PC-9 (cell line): ENCODE measurements at regions of chr19 and their contacts with region 1.

Region 1: GRCh38 chr19:2578901-2579677 is 103.2 kb downstream of the GADD45B start:
- DNase-seq: peak; percentile 86 to 93
- H3K4me3 ChIP-seq: peak overlapping the region; percentile 51; the same call in 1 of the 2 replicates
- H3K27ac ChIP-seq: peak overlapping the region; percentile 90
- H3K4me1 ChIP-seq: peaks cover 21% of the 10 kb centered on the region
- H3K27me3 ChIP-seq: no peaks in the 10 kb centered on the region
- CTCF ChIP-seq: peak; percentile 87

Region 2: GRCh38 chr19:2494444-2495129 is 84.5 kb before region 1 on chr19:
- CTCF ChIA-PET with region 1: interaction called, 3 read pairs
- POLR2A ChIA-PET with region 1: no interaction called
- intact Hi-C with region 1: loop called (anchors 5 kb)
- DNase-seq: peak; percentile 32 to 50
- H3K4me3 ChIP-seq: peak overlapping the region; percentile 62
- H3K27ac ChIP-seq: peak overlapping the region; percentile 75
- H3K4me1 ChIP-seq: peaks cover 37% of the 10 kb centered on the region
- H3K27me3 ChIP-seq: no peaks in the 10 kb centered on the region
- CTCF ChIP-seq: no peak

Region 3: GRCh38 chr19:2524838-2525723 is 54.0 kb before region 1 on chr19:
- CTCF ChIA-PET with region 1: interaction called, 5 read pairs
- POLR2A ChIA-PET with region 1: interaction called, 4 read pairs
- intact Hi-C with region 1: loop called (anchors 1 kb)
- DNase-seq: peak; percentile 88 to 93
- H3K4me3 ChIP-seq: peak overlapping the region; percentile 50
- H3K27ac ChIP-seq: peak overlapping the region; percentile 88
- H3K4me1 ChIP-seq: peaks cover 41% of the 10 kb centered on the region
- H3K27me3 ChIP-seq: no peaks in the 10 kb centered on the region
- CTCF ChIP-seq: no peak

Region 4: DNA sequence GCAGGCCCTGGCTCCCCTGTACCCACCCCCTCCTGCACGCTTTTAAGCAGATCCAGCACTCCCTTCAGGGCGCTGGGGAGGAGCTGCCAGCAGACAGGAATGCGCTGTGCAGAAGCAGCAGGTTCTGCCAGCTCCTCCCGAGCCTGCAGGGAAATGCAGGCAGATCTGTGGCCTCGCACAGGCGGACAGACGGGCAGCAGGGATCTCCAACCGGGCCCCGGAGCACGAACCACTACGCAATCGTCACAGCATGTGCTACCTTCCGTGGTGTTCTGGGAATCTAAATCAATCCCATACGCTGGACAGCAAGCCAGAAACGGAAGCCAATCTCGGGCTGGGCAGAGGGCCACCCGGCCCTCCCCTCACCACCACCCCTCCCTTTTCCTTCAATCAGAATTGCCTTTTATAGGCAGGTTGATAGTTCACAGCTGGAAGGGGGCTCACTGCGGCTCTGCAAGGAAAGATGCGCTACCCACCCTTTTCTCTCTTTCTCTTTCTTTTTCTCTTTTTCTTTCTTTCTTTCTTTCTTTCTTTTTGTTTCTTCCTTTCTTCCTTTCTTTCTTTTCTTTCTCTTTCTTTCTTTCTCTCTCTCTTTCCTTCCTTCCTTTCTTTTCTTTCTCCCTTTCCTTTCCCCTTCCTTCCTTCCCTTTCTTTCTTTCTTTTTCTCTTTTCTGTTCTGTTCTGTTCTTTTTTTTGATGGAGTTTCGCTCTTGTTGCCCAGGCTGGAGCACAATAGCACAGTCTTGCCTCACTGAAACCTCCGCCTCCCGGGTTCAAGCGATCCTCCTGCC is 23.5 kb after region 1 on chr19:
- CTCF ChIA-PET with region 1: interaction called, 8 read pairs
- POLR2A ChIA-PET with region 1: interaction called, 15 read pairs
- intact Hi-C with region 1: no loop called
- DNase-seq: peak; percentile 56 to 59
- H3K4me3 ChIP-seq: peak overlapping the region; percentile 26; the same call in 1 of the 2 replicates
- H3K27ac ChIP-seq: no peak overlapping the region
- H3K4me1 ChIP-seq: no peaks in the 10 kb centered on the region
- H3K27me3 ChIP-seq: no peaks in the 10 kb centered on the region
- CTCF ChIP-seq: no peak

Region 5: DNA sequence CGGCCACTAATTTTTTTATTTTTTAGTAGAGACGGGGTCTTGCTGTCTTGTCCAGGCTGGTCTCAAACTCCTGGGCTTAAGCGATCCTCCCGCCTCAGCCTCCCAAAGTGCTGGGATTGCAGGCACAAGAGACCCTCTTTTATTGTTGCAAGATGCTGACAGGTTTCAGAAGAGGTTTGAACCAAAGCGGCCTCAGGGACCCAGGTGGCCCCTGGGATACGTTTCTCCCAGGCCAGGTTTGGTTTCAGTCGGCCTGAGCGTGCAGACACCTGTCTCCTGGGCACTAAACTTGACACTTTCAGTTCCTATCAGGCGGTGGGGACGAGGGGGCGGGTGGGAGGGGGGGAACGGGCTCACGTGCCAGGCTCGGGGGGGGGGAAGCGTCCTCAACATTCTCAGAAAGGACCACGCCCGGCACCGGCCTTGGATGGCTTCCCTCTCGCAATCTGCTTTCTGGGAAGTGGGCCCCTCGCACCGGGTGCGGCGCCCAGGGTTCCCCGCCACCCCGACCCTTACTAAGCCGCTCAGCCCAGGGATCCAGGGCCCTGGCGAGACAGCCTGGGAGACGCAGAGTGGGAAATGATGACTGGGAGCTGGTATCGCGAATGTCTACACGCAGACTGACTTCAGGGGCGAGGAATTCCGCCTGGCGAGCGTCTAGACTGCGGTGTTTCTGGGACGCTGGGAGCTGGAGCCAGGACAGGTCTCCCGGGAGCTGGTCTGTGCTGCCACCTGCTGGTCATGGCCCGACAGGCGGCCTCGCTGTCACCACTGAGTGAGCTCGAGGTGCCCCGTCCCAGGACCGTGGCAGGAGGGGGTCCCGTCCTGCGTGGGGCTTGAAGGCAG is 31.8 kb after region 1 on chr19:
- CTCF ChIA-PET with region 1: interaction called, 3 read pairs
- POLR2A ChIA-PET with region 1: interaction called, 5 read pairs
- intact Hi-C with region 1: loop called (anchors 1 kb)
- DNase-seq: peak; percentile 60 to 85
- H3K4me3 ChIP-seq: no peak overlapping the region; the same call in 1 of the 2 replicates
- H3K27ac ChIP-seq: no peak overlapping the region
- H3K4me1 ChIP-seq: no peaks in the 10 kb centered on the region
- H3K27me3 ChIP-seq: no peaks in the 10 kb centered on the region
- CTCF ChIP-seq: peak; percentile 86